ENCODE measurements at regions of chr10 and their contacts with region 1.

Region 1: DNA sequence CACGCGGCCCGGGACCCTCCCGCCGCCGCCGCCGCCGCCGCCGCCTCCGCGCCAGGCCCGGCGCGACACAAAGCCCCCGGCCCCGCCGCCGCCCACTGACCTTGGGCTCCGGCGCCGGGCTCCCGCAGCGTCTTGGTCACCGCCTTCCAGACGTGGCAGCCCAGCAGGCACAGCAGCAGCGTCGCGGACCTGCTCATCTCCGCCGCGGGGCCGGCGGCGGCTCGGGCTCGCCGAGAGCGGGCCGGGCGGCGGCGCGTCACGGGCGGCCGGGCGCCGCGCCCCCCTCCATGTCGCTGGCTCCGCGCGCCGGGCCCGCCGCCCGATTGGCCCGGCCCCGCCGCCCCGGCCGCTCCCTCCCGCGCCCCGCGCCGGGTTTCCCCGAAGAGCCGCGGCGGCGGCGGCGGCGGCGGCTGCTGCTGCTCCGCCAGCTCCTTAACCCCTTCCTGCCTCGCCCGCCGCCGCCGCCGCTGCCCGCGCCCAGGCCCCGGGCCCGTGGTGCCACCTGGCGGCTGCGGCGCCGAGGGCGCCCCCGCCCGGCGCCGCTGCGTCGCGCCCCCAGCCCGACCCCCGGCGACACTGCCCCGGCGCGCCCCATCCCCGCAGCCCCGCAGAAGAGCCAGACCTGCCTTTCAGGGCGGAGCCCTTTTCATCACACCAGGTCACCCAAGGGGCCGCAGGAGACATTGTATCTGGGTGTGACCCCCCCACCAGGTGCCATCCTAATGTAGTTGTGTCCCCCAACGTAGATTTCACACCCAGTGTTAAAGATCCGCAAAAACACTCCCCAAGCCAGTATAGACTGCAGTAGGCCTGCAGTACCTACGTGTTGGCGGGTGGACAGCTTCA is at the start of gene FAM171A1:
- DNase-seq: no peak
- ATAC-seq: peak; percentile 82
- H3K4me3 ChIP-seq: peak within 1 kb of the TSS; percentile 53 to 63
- H3K27ac ChIP-seq: peak within 1 kb of the TSS; percentile 56; the same call in 1 of the 2 replicates
- H3K4me1 ChIP-seq: peaks cover 6 to 17% of the 10 kb centered on the region in 2 experiments; a peak in 3 of 4 replicates
- H3K27me3 ChIP-seq: no peaks in the 10 kb centered on the region
- CTCF ChIP-seq: peak; percentile 1 to 26 (median 10); a peak in 1 of 6 replicates
- POLR2A ChIP-seq: no peak
- RAD21 ChIP-seq: peak; percentile 35; the same call in 1 of the 2 replicates
- total RNA-seq, gene FAM171A1: 32.5 TPM

Region 2: DNA sequence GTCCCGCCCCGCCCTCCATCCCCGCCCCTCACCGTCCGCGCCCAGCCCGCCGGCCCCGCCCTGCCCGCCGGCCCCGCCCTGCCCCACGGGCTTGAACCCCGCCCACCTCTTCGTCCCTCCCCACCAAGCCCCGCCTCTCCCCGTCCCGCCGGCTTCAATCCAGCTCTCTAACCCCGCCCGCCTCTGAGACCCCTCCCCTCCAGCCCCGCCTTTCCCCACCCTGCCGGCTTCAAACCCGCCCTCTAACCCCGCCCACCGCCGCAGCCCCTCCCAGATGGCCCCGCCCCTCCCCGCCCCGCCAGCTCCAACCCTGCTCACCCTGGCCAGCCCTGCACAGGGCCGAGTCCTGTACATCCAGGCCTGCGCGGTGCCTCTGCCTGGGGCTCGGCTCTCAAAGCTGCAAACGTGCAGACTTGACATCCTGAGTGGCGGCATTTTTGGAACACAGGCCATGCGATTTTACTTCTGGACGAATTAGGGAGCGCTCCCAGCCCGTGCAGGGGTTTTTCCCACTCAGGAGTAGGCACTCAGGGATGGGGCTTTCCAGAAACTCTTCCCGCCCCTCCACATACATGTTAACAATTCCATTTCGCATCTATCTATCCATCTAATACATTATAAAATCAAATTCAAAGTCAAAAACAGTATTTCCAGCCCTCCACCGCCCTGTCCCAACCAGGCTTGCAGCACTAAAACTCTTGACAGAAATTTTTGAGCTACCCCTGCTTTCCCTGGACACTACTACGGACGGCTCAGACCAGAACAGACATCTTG is 202.1 kb before region 1 on chr10:
- CTCF ChIA-PET with region 1: no interaction called
- POLR2A ChIA-PET with region 1: no interaction called
- RAD21 ChIA-PET with region 1: no interaction called
- intact Hi-C with region 1: loop called (anchors 5 kb)
- DNase-seq: peak; percentile 92
- ATAC-seq: peak; percentile 69
- H3K4me3 ChIP-seq: peak overlapping the region; percentile 4 to 34; a peak in 1 of 4 replicates
- H3K27ac ChIP-seq: no peak overlapping the region; the same call in 1 of the 2 replicates
- H3K4me1 ChIP-seq: peaks cover 18 to 22% of the 10 kb centered on the region in 2 experiments
- H3K27me3 ChIP-seq: no peaks in the 10 kb centered on the region
- CTCF ChIP-seq: no peak
- POLR2A ChIP-seq: no peak
- RAD21 ChIP-seq: no peak

Region 3: DNA sequence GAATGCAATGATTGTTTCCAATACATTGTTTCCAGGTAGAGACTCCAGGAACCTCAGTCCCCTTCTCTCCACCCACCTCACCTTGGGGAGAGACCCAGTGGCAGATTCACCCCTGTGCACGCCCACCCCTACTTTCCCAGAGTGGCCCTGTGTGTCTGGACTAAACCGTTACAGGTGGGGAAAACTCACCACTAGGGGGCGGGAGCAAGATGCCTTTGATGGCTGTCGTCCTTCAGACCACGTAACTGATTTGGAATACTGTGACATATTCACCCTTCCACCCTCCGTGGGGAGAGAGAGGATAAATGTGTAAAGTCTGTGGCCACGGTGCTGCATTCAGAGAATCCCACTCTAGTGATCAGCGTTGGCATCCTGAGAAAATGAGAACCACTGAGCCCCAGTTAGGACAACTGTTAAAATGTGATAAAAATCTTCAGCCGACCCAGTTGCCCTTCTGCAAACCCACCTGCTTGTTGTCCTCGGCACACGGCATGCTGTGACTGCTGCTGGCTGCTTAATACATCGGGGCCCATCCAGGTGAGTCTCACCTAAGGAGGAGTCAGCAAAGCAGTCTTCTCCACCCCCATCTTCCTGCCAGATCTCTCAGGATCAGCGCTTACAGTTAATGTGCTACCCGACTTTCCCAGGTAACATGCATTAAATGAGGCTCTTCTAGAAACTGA is 161.1 kb before region 1 on chr10:
- CTCF ChIA-PET with region 1: interaction called, 3 read pairs
- POLR2A ChIA-PET with region 1: no interaction called
- RAD21 ChIA-PET with region 1: no interaction called
- intact Hi-C with region 1: loop called (anchors 2 kb)
- DNase-seq: peak; percentile 64
- ATAC-seq: peak; percentile 81
- H3K4me3 ChIP-seq: no peak overlapping the region
- H3K27ac ChIP-seq: no peak overlapping the region; the same call in 1 of the 2 replicates
- H3K4me1 ChIP-seq: peaks cover 24 to 51% of the 10 kb centered on the region in 2 experiments
- H3K27me3 ChIP-seq: no peaks in the 10 kb centered on the region
- CTCF ChIP-seq: peak; percentile 71 to 97 (median 93)
- POLR2A ChIP-seq: no peak
- RAD21 ChIP-seq: peak; percentile 73

Region 4: GRCh38 chr10:15262036-15262713 is 108.9 kb before region 1 on chr10:
- CTCF ChIA-PET with region 1: no interaction called
- POLR2A ChIA-PET with region 1: no interaction called
- RAD21 ChIA-PET with region 1: no interaction called
- intact Hi-C with region 1: loop called (anchors 5 kb)
- DNase-seq: no peak
- ATAC-seq: peak; percentile 69
- H3K4me3 ChIP-seq: no peak overlapping the region
- H3K27ac ChIP-seq: no peak overlapping the region
- H3K4me1 ChIP-seq: no peaks in the 10 kb centered on the region
- H3K27me3 ChIP-seq: no peaks in the 10 kb centered on the region
- CTCF ChIP-seq: peak; percentile 18 to 36 (median 25); a peak in 2 of 6 replicates
- POLR2A ChIP-seq: no peak
- RAD21 ChIP-seq: peak; percentile 40

Region 5: GRCh38 chr10:16348891-16349290 is 977.8 kb after region 1 on chr10:
- CTCF ChIA-PET with region 1: no interaction called
- POLR2A ChIA-PET with region 1: no interaction called
- RAD21 ChIA-PET with region 1: no interaction called
- intact Hi-C with region 1: no loop called
- DNase-seq: no peak
- ATAC-seq: no peak
- H3K4me3 ChIP-seq: no peak overlapping the region
- H3K27ac ChIP-seq: no peak overlapping the region
- H3K4me1 ChIP-seq: no peaks in the 10 kb centered on the region
- H3K27me3 ChIP-seq: 0 out of 2 replicates have a peak, but pooled peaks cover 11% of the 10 kb centered on the region
- CTCF ChIP-seq: no peak
- POLR2A ChIP-seq: no peak
- RAD21 ChIP-seq: no peak

Measured in HCT116 (cell line).